ENCODE measurements at regions of chr20 and their contacts with region 1.

Region 1: GRCh38 chr20:36439040-36439730 is 102.1 kb upstream of the MYL9 start:
- DNase-seq: peak; percentile 48 to 79 (median 62)
- H3K4me3 ChIP-seq: no peak overlapping the region
- H3K27ac ChIP-seq: no peak overlapping the region
- H3K4me1 ChIP-seq: no peaks in the 10 kb centered on the region
- H3K27me3 ChIP-seq: no peaks in the 10 kb centered on the region
- CTCF ChIP-seq: peak; percentile 40 to 65 (median 43)
- EP300 ChIP-seq: no peak
- POLR2A ChIP-seq: no peak

Region 2: GRCh38 chr20:35421322-35421721 is 1017.9 kb before region 1 on chr20:
- intact Hi-C with region 1: no loop called
- DNase-seq: no peak
- H3K4me3 ChIP-seq: no peak overlapping the region
- H3K27ac ChIP-seq: no peak overlapping the region
- H3K4me1 ChIP-seq: no peaks in the 10 kb centered on the region
- H3K27me3 ChIP-seq: no peaks in the 10 kb centered on the region
- CTCF ChIP-seq: no peak
- EP300 ChIP-seq: no peak
- POLR2A ChIP-seq: no peak

Region 3: DNA sequence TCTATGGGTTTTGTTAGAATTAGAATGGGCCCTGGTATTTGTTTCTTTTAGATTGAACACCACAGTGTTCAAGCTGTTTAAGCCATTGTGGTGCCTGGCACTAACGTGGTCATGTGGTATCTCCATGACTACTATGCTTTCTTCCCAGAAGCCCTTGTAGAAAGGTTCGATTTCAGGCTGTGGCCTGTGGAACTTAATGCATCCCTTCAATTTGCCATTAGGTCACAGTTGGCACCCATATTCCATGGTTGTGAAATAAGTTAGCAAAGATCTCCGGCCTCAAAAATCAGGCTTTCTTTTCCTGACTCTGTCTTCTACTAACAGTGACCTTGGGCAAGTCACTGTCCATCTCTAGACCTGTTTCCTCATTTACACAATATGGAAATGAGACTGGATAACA is 234.2 kb before region 1 on chr20:
- intact Hi-C with region 1: loop called in 3 of 4 experiments (anchors 5 to 10 kb)
- DNase-seq: no peak
- H3K4me3 ChIP-seq: no peak overlapping the region
- H3K27ac ChIP-seq: no peak overlapping the region
- H3K4me1 ChIP-seq: no peaks in the 10 kb centered on the region
- H3K27me3 ChIP-seq: no peaks in the 10 kb centered on the region
- CTCF ChIP-seq: no peak
- EP300 ChIP-seq: no peak
- POLR2A ChIP-seq: no peak

Region 4: DNA sequence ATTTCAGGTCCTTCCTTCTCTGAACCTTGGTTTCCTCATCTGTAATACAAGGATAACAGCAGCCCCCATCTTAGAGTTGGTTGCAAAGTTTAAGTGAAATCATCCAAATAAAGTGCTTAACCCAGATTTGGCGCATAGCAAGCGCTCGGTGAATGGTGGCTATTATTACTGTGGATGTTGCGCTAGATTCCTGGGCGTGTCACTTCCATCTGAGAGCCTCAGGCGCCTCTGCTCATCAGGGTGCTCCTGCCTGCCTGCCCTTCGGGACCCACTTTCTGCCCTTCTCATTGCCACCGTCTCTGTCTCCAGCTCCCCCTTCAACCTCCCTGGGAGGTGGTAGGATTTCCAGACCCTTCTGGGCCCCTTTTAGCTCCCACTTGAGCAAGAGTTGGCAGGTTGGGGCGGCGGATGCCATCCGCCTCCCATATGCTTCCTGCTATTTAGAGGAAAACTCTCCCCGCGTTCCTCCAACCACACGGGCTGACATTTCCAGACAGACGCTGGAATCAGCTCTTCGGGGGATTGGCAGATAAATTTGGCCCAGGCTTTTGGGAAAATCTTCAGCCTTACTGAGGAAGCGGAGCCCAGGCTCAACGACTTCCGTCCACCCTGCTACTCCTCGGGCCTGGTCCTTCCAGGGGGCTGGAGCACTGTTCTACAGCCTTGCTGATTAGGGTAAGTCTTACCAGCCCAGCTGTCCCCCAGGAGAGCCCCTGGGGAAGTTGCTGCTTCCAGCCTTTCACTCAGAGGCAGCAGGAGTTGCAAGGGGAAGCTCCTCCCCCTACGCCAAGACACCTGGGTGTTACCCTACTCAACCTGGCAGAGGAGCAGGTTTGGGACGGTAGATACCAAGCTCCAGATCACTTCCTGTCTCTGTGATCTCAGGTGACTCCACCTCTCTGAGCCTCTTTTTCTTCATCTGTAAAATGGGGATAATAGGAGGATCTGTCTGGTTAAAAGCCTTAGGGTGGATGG is 61.5 kb before region 1 on chr20:
- intact Hi-C with region 1: no loop called
- DNase-seq: no peak
- H3K4me3 ChIP-seq: no peak overlapping the region
- H3K27ac ChIP-seq: no peak overlapping the region
- H3K4me1 ChIP-seq: no peaks in the 10 kb centered on the region
- H3K27me3 ChIP-seq: no peaks in the 10 kb centered on the region
- CTCF ChIP-seq: no peak
- EP300 ChIP-seq: no peak
- POLR2A ChIP-seq: no peak

Region 5: GRCh38 chr20:36519944-36520343 is 80.8 kb after region 1 on chr20:
- intact Hi-C with region 1: no loop called
- DNase-seq: no peak
- H3K4me3 ChIP-seq: no peak overlapping the region
- H3K27ac ChIP-seq: peak overlapping the region in 1 of 2 donors; percentile 82
- H3K4me1 ChIP-seq: peaks cover 11% of the 10 kb centered on the region
- H3K27me3 ChIP-seq: no peaks in the 10 kb centered on the region
- CTCF ChIP-seq: no peak
- EP300 ChIP-seq: no peak
- POLR2A ChIP-seq: no peak

Measured in ovary (tissue), 10 donors.